IMR-90 (cell line): ENCODE measurements at regions of chr1 and their contacts with region 1.

Region 1: GRCh38 chr1:11214698-11215380 is 25.7 kb downstream of the ANGPTL7 start:
- DNase-seq: no peak
- ATAC-seq: no peak
- H3K4me3 ChIP-seq: no peak overlapping the region
- H3K27ac ChIP-seq: no peak overlapping the region
- H3K4me1 ChIP-seq: no peaks in the 10 kb centered on the region
- H3K27me3 ChIP-seq: no peaks in the 10 kb centered on the region
- CTCF ChIP-seq: no peak
- POLR2A ChIP-seq: no peak
- RAD21 ChIP-seq: no peak

Region 2: GRCh38 chr1:11012250-11013171 is 202.3 kb before region 1 on chr1 and contains the start of gene TARDBP:
- CTCF ChIA-PET with region 1: no interaction called
- POLR2A ChIA-PET with region 1: no interaction called
- dilution Hi-C with region 1: no loop called
- in situ Hi-C with region 1: no loop called
- intact Hi-C with region 1: no loop called
- DNase-seq: peak; percentile 83
- ATAC-seq: peak; percentile 94
- H3K4me3 ChIP-seq: peak within 1 kb of the TSS; percentile 89
- H3K27ac ChIP-seq: peak within 1 kb of the TSS; percentile 99
- H3K4me1 ChIP-seq: peaks cover 2% of the 10 kb centered on the region; the same call in 1 of the 2 replicates
- H3K27me3 ChIP-seq: no peaks in the 10 kb centered on the region
- CTCF ChIP-seq: no peak
- POLR2A ChIP-seq: peak; percentile 96
- RAD21 ChIP-seq: no peak
- total RNA-seq, gene TARDBP: 36.7 and 98.0 TPM in 2 replicates

Region 3: GRCh38 chr1:11188381-11188780 is 26.5 kb before region 1 on chr1:
- CTCF ChIA-PET with region 1: no interaction called
- POLR2A ChIA-PET with region 1: interaction called, 12 read pairs
- dilution Hi-C with region 1: no loop called
- in situ Hi-C with region 1: no loop called
- intact Hi-C with region 1: no loop called
- DNase-seq: no peak
- ATAC-seq: peak; percentile 64; the same call in 1 of the 2 replicates
- H3K4me3 ChIP-seq: no peak overlapping the region
- H3K27ac ChIP-seq: no peak overlapping the region
- H3K4me1 ChIP-seq: no peaks in the 10 kb centered on the region
- H3K27me3 ChIP-seq: no peaks in the 10 kb centered on the region
- CTCF ChIP-seq: no peak
- POLR2A ChIP-seq: no peak
- RAD21 ChIP-seq: no peak